HAP-1 (cell line): ENCODE measurements at regions of chr7 and their contacts with region 1.

Region 1: DNA sequence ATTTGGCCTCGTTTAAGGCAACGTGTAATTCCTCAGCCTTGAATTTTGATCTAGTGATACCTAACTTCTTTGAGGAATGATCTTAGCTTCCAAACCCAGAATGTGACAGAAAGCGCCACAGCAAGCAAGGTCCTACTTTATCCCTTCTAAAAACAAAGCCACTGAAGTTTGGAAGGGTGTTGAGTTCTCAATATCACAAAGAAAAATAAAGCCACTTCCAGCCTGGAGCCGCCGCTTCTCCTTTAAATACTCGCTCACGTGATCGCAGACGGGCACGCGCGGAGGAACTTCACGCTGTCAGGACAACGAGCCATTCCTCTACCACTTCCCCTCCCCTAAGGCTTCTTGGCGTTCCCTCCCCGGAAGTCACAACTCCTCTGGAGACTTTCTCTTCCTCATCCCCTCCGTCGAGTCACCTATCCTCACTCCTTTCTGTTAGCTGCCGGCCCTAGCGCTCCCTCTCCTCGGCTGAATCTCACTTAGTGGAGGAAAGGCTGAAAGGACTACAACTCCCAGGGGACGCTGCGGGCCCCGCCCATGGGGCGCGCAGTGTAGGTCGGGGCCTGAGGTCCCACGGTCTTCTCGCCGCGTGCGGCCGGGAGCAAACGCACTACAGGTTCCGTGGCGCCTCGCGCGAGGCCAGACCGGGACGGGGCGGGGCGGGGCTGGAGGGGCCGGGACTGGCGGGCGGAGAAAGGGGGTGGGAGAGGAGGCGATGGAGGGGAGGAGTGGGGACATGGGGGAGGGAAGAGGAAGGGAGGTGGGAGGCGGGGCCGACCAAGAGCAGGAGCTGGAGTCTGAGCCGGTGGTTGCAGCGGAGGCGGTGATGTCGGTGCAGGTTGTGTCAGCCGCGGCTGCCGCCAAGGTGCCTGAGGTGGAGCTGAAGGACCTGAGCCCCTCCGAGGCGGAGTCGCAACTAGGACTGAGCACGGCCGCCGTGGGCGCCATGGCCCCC is at the start of gene AHCYL2:
- DNase-seq: peak; percentile 97 to 99
- H3K4me3 ChIP-seq: peak within 1 kb of the TSS; percentile 67
- H3K4me1 ChIP-seq: peaks cover 8% of the 10 kb centered on the region
- H3K27me3 ChIP-seq: no peaks in the 10 kb centered on the region

Region 2: DNA sequence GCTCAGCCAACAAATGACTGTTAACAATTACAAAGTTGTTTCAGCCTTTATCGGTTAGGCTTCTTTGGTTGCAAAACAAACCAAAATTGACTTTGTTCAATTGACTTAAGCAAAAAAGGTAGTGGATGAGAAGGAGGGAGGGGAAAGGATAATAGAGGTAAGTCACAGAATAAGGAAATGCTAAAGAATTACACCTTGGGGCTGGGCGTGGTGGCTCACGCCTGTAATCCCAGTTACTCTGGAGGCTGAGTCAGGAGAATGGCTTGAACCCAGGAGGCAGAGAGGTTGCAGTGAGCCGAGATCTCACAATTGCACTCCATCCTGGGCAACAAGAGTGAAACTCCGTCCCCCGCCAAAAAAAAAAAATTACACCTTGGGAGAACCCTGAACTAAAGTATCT is 41.7 kb after region 1 on chr7:
- in situ Hi-C with region 1: loop called (anchors 5 kb)
- DNase-seq: no peak
- H3K4me3 ChIP-seq: no peak overlapping the region
- H3K4me1 ChIP-seq: peaks cover 4% of the 10 kb centered on the region
- H3K27me3 ChIP-seq: no peaks in the 10 kb centered on the region

Region 3: DNA sequence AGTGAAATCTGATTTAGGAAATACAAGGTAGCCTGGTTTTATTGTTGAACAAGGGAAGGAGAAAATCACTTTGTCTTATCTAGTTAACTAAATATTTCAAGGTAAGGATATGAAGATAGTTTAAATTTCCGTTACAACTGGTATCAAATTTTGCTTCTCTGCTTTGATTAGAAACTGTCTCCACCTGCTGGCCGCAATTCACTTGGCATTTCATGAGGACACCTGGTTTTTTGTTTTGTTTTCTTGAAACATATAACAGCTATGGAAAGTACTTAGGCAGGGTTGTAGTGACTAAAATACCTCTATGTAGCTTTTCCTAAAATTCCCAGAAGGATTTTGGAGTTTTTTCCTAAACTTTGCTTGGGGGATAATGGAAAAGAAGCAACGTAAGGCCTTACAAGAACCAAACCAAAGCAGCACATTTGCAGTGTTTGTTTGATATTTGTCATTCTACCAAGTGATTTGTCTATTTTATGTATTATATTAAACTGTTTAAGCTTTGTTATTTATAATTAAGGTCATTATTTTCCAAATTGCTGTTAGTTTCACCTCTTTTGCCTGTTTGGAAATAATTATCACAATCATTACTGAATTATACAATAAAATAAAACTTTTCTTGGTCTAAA is 73.9 kb after region 1 on chr7:
- in situ Hi-C with region 1: loop called (anchors 5 kb)
- DNase-seq: peak; percentile 28 to 70
- H3K4me3 ChIP-seq: no peak overlapping the region
- H3K4me1 ChIP-seq: peaks cover 12% of the 10 kb centered on the region
- H3K27me3 ChIP-seq: no peaks in the 10 kb centered on the region